AG04449 (cell line): ENCODE measurements at regions of chr4 and their contacts with region 1.

Region 1: DNA sequence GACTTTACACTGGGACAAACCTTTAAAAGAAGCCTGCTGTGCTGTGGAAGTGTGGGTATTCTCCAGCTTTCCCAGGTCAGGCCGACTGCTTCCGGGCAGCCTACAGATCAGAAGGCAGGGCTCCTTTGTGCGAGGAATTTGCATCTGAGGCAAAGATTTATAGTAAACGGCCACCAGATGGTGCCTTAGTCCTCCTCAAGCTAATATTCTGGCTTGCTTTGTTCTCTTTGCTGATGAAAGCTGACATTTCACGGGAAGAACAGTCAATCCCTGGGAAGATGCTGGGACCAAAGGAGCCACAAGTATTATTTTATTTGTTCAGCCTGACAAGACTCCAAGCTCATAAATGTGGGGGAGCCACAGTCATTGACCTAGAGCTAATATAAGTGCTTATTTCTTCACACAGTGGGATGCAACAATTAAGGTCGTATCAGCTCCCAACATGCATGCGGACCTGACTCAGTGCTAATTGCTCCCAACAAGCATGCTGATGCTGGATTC is 120.7 kb upstream of the TRIM2 start:
- DNase-seq: peak; percentile 31
- H3K4me3 ChIP-seq: no peak overlapping the region
- CTCF ChIP-seq: peak; percentile 59

Region 2: DNA sequence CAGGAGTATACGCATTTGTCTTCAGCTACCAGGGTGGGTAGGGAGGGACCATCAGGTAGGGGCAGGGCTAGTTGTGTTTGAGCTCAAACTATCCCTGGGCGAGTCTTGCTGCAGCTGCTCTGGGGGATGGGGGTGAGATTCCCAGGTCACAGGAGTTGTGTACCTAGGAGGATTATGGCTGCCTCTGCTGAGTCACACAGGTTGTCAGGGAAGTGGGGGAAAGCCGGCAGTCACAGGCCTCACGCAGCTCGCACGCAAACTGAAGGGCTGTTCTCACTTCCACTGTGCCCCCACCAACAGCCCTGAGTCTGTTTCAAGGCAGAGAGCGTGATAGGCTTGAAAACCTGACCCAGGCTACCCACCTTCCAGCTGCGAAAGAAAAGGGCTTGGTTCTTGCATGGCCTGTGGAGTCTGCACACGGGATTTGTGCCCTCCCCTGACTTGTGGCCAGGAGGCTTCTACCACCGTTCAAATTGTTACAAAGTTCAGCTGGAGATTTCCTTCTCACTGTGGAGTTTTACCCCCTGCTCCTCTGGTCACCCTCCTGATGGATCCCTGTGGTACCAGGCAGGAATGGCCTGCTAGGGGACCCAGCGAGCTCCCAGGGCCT is 239.9 kb before region 1 on chr4:
- CTCF ChIA-PET with region 1: interaction called, 64 read pairs
- POLR2A ChIA-PET with region 1: no interaction called
- DNase-seq: no peak
- H3K4me3 ChIP-seq: no peak overlapping the region
- CTCF ChIP-seq: no peak

Region 3: GRCh38 chr4:152850377-152850776 is 233.1 kb before region 1 on chr4:
- CTCF ChIA-PET with region 1: interaction called, 64 read pairs
- POLR2A ChIA-PET with region 1: no interaction called
- DNase-seq: no peak
- H3K4me3 ChIP-seq: no peak overlapping the region
- CTCF ChIP-seq: no peak

Region 4: GRCh38 chr4:153095448-153096204 is 12.1 kb after region 1 on chr4:
- CTCF ChIA-PET with region 1: interaction called, 94 read pairs
- POLR2A ChIA-PET with region 1: no interaction called
- DNase-seq: no peak
- H3K4me3 ChIP-seq: no peak overlapping the region
- CTCF ChIP-seq: no peak

Region 5: DNA sequence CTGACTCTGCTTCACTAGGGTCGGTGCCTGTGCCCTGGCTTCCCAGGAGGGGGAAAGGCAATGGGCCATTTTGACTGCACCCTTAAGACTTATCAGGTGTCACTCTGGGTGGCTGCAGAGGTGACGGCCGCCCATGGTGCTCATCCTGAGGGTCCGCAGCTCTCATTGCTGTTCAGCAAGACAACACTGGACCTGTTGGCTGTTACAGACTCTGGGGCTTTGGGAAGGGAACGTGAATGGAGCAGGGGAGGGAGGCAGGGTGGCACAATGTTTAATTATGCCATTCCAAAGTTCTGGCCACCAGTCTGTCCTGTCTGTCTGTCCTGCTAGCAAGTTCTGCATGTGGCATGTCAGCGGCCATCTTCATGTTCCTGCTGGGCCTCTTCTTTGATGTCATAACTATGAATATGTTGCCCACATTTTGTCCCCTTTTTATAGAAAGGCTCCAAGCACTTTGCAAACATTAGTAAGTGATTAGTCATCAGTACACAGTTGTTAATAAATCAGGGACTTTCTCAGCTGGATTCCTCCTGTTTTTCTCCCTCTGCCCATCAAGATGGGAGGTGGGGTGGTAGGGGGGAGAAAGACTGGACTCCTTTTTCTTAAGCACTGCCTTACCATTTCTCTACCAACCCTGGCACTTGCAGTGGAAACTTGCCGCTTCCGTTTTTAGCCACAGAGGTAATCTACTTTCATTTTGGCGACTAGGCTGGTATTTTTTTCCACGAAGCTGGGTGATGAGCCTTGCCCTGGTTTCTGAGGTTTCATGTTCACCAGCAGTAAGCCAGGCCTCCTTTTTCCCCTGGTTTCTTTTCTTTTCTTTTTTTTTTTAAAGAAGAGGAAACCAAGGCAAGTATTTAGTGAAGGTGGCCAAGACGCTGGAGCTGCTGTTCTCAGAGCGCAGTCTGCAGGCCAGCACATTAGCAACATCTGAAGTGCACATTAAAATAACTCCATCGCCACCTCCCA is 32.1 kb after region 1 on chr4:
- CTCF ChIA-PET with region 1: interaction called, 133 read pairs
- POLR2A ChIA-PET with region 1: no interaction called
- DNase-seq: peak; percentile 44
- H3K4me3 ChIP-seq: peak overlapping the region; percentile 40
- CTCF ChIP-seq: no peak